Mammary epithelial cell (primary cell): ENCODE measurements at regions of chr9 and their contacts with region 1.

Region 1: GRCh38 chr9:99819856-99820684 is 1.6 kb upstream of the NR4A3 start:
- DNase-seq: peak; percentile 91
- H3K4me3 ChIP-seq: peak overlapping the region; percentile 87 to 92 (median 92)
- H3K27ac ChIP-seq: peak overlapping the region; percentile 83
- H3K4me1 ChIP-seq: peaks cover 37% of the 10 kb centered on the region
- H3K27me3 ChIP-seq: peaks cover 12% of the 10 kb centered on the region
- CTCF ChIP-seq: peak in 1 of 2 donors; percentile 12

Region 2: DNA sequence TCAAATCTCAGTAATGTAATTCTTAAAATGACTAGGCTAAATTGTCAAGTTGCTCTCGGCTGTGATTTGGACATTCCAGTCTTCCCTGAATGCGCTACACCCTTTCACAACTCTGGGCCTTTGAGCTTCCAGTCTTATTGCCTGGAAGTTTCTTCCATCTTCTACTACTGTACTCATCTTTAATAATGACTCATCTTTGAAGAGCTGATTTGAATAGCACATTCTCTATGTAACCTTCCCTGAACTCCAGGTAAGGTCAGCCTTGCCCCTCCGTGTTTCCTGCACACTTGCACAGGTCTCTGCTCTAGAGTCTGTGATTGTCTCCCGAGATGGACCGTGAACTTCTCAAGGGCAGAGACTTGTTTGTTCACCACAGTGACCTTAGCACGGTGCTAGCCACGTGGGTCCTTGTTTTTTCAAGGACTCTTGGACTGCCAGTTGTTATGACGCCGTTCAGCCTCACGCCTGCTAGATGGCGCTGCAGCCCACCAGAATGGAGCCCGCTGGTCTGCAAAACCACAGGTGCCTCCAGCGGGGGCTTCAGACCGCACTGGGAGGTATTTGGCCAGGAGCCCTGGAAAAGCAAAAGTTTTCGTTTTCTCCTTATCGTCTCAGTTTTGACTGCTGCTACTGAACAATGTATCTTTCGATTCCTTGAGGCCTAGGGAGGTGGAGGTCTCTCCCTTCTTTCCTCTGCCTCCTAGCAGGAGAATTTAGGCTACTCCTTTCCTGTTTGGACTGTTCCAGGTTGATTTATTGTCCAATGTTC is 553.6 kb before region 1 on chr9:
- CTCF ChIA-PET with region 1: no interaction called
- dilution Hi-C with region 1: no loop called
- in situ Hi-C with region 1: loop called in 1 of 2 experiments (anchors 25 kb)
- intact Hi-C with region 1: loop called (anchors 2 kb)
- DNase-seq: peak; percentile 44
- H3K4me3 ChIP-seq: no peak overlapping the region
- H3K27ac ChIP-seq: no peak overlapping the region
- H3K4me1 ChIP-seq: no peaks in the 10 kb centered on the region
- H3K27me3 ChIP-seq: no peaks in the 10 kb centered on the region
- CTCF ChIP-seq: peak; percentile 71 to 89

Region 3: GRCh38 chr9:99807276-99807852 is 12.7 kb before region 1 on chr9:
- CTCF ChIA-PET with region 1: no interaction called
- dilution Hi-C with region 1: no loop called
- in situ Hi-C with region 1: no loop called
- intact Hi-C with region 1: loop called (anchors 1 kb)
- DNase-seq: peak; percentile 63
- H3K4me3 ChIP-seq: no peak overlapping the region
- H3K27ac ChIP-seq: no peak overlapping the region
- H3K4me1 ChIP-seq: peaks cover 4% of the 10 kb centered on the region
- H3K27me3 ChIP-seq: no peaks in the 10 kb centered on the region
- CTCF ChIP-seq: peak; percentile 71 to 78

Region 4: DNA sequence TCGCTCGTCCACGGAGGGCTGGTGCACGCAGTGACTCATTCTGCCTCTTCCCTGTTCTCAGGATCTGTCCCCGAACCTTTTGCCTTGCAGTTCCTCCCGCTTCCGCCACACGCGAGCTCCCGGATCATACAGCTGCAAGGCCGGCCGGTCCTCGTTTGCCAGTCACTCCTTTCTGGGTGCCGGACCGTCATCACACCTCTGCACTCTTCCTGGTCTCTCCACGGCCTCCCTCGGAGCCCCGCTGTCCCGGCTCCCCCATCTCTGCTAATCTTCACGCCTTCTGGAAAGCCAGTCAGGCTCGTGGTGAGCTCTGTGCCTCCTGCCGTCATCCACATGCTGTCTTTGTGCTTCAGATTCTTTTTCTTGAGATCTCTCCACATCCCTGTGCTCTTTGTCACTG is 178.2 kb after region 1 on chr9:
- CTCF ChIA-PET with region 1: no interaction called
- dilution Hi-C with region 1: no loop called
- in situ Hi-C with region 1: loop called in 1 of 2 experiments (anchors 25 kb)
- intact Hi-C with region 1: no loop called
- DNase-seq: no peak
- H3K4me3 ChIP-seq: no peak overlapping the region
- H3K27ac ChIP-seq: no peak overlapping the region
- H3K4me1 ChIP-seq: no peaks in the 10 kb centered on the region
- H3K27me3 ChIP-seq: no peaks in the 10 kb centered on the region
- CTCF ChIP-seq: no peak

Region 5: DNA sequence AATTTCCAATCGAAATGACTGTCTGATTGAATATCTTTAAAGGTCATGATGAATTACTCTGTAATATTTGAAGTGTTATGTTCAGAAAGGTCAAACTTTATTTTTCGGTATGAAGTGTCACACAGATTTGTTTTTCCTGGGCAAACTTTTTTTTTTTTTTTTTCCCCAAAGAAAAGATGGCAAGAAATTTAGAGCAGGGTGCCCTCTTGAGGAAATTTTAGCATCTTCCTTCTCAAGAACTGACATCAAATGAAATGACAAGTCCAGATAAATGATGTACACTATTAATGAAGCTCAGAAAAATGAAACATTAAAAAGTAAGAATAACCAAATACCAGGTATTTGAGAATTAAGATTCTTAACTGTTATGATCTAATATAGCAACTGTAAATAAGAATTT is 402.6 kb after region 1 on chr9:
- CTCF ChIA-PET with region 1: no interaction called
- dilution Hi-C with region 1: no loop called
- in situ Hi-C with region 1: no loop called
- intact Hi-C with region 1: loop called (anchors 5 kb)
- DNase-seq: peak; percentile 17
- H3K4me3 ChIP-seq: no peak overlapping the region
- H3K27ac ChIP-seq: no peak overlapping the region
- H3K4me1 ChIP-seq: no peaks in the 10 kb centered on the region
- H3K27me3 ChIP-seq: no peaks in the 10 kb centered on the region
- CTCF ChIP-seq: peak; percentile 21 to 45